Activated CD8-positive, alpha-beta T cell treated with anti-CD3 and anti-CD28 coated beads, Interleukin-2, amount 10 ng/mL, durations not matched to agents 7 days and 5 days (primary cell): ENCODE measurements at regions of chr10 and their contacts with region 1.

Region 1: GRCh38 chr10:123132576-123133477 is 2.9 kb upstream of the HMX3 start:
- DNase-seq: peak; percentile 90
- ATAC-seq: peak; percentile 65
- H3K4me3 Mint-ChIP-seq: peak overlapping the region; percentile 59
- H3K27ac Mint-ChIP-seq: peak overlapping the region; percentile 39
- H3K4me1 Mint-ChIP-seq: peaks cover 31% of the 10 kb centered on the region
- H3K27me3 Mint-ChIP-seq: peaks cover 67% of the 10 kb centered on the region

Region 2: GRCh38 chr10:123144697-123145541 is 12.1 kb after region 1 on chr10:
- CTCF ChIA-PET with region 1: interaction called, 32 read pairs
- POLR2A ChIA-PET with region 1: interaction called, 8 read pairs
- DNase-seq: no peak
- ATAC-seq: no peak
- H3K4me3 Mint-ChIP-seq: no peak overlapping the region
- H3K27ac Mint-ChIP-seq: peak overlapping the region; percentile 27
- H3K4me1 Mint-ChIP-seq: peaks cover 56% of the 10 kb centered on the region
- H3K27me3 Mint-ChIP-seq: peaks cover 81% of the 10 kb centered on the region

Region 3: DNA sequence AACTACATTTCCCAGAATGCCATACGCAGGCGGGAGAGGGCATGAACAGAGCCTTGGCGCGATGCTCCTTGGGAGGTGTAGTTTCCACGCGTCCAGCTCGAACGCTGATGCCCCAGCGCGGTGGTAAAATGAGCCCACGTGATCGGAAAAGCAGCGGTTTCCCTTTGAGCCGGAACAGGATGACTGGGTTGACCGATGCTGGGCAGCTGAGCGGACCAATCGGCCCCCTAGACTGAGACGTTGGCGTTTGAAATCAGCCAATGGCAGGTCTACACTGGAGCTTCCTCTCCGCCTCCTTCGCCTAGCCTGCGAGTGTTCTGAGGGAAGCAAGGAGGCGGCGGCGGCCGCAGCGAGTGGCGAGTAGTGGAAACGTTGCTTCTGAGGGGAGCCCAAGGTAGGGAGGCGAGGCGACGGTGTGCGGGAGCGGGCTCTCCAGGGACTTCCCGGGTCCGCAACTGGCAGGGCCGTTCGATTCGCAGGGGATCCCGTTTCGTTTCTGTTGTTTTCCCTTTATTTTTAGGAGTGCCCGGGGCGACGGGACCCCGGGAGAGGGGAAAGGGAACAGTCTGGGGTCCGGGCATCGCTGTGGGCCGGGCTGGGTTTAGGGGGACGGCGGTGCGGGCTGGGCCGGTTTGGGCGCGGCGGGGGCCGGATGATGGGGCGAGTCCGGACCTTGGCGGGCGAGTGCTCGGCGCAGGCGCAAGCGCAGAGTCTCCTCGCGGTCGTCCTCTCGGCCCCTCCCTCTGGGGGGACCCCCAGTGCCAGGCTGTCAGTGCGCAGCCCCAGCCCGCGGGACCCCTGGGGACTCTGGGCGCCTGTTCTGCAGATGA is 21.5 kb after region 1 on chr10 and contains the start of gene BUB3:
- CTCF ChIA-PET with region 1: interaction called, 32 read pairs
- POLR2A ChIA-PET with region 1: interaction called, 8 read pairs
- DNase-seq: peak; percentile 98
- ATAC-seq: peak; percentile 96
- H3K4me3 Mint-ChIP-seq: peak within 1 kb of the TSS; percentile 96
- H3K27ac Mint-ChIP-seq: peak within 1 kb of the TSS; percentile 99
- H3K4me1 Mint-ChIP-seq: peaks cover 76% of the 10 kb centered on the region
- H3K27me3 Mint-ChIP-seq: peaks cover 16% of the 10 kb centered on the region
- total RNA-seq, gene BUB3: 265 to 267 TPM

Region 4: GRCh38 chr10:123380497-123381085 is 247.8 kb after region 1 on chr10:
- CTCF ChIA-PET with region 1: interaction called, 11 read pairs
- POLR2A ChIA-PET with region 1: no interaction called
- DNase-seq: no peak
- ATAC-seq: no peak
- H3K4me3 Mint-ChIP-seq: no peak overlapping the region
- H3K27ac Mint-ChIP-seq: no peak overlapping the region
- H3K4me1 Mint-ChIP-seq: no peaks in the 10 kb centered on the region
- H3K27me3 Mint-ChIP-seq: peaks cover 5% of the 10 kb centered on the region